HCT116 (cell line): ENCODE measurements at regions of chr4 and their contacts with region 1.

Region 1: GRCh38 chr4:10116580-10117358 is at the start of gene WDR1:
- DNase-seq: peak; percentile 75
- ATAC-seq: peak; percentile 92
- H3K4me3 ChIP-seq: peak within 1 kb of the TSS; percentile 83 to 85
- H3K27ac ChIP-seq: peak within 1 kb of the TSS; percentile 77
- H3K4me1 ChIP-seq: peaks cover 9 to 24% of the 10 kb centered on the region in 2 experiments
- H3K27me3 ChIP-seq: no peaks in the 10 kb centered on the region
- CTCF ChIP-seq: no peak
- POLR2A ChIP-seq: peak; percentile 93
- RAD21 ChIP-seq: no peak
- total RNA-seq, gene WDR1: 223 TPM

Region 2: GRCh38 chr4:9889306-9889705 is 227.5 kb before region 1 on chr4:
- CTCF ChIA-PET with region 1: no interaction called
- POLR2A ChIA-PET with region 1: no interaction called
- RAD21 ChIA-PET with region 1: no interaction called
- intact Hi-C with region 1: no loop called
- DNase-seq: no peak
- ATAC-seq: no peak
- H3K4me3 ChIP-seq: no peak overlapping the region
- H3K27ac ChIP-seq: no peak overlapping the region
- H3K4me1 ChIP-seq: no peaks in the 10 kb centered on the region
- H3K27me3 ChIP-seq: no peaks in the 10 kb centered on the region
- CTCF ChIP-seq: no peak
- POLR2A ChIP-seq: no peak
- RAD21 ChIP-seq: no peak

Region 3: DNA sequence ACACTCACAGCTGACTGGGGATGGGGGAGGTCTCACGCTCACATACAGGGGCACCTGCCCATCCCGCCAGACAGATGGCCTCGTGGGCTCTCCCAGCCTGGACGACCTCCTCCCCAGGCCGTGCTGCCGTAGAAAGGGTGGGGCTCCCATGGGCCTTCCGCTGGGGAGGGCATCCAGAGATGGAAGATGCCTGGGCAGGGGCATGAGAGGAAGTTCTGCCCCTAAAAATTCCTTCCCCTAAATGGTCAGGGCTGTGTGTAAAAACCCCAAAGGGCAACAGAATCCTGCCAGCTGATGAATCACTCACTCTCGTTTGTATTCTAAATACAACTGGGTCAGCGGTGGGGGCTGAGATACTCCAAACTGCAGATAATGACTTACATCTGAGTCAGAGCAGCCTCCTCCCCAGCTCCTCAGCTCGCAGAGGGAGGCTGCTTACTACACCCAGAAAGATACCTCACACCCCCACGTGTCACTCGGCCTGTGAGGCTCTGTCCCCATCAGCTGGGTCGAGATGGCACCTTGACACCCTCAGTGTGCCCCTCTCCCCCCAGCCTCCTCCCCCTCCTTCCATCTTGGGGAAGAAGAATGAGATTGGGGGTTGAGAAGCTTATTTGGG is 10.2 kb before region 1 on chr4:
- CTCF ChIA-PET with region 1: interaction called, 4 read pairs
- POLR2A ChIA-PET with region 1: interaction called, 38 read pairs
- RAD21 ChIA-PET with region 1: no interaction called
- intact Hi-C with region 1: no loop called
- DNase-seq: peak; percentile 62
- ATAC-seq: peak; percentile 91
- H3K4me3 ChIP-seq: peak overlapping the region; percentile 13 to 27; a peak in 2 of 4 replicates
- H3K27ac ChIP-seq: peak overlapping the region; percentile 60
- H3K4me1 ChIP-seq: peaks cover 13 to 65% of the 10 kb centered on the region in 2 experiments
- H3K27me3 ChIP-seq: no peaks in the 10 kb centered on the region
- CTCF ChIP-seq: no peak
- POLR2A ChIP-seq: no peak
- RAD21 ChIP-seq: no peak

Region 4: GRCh38 chr4:10783351-10783750 is 666.6 kb after region 1 on chr4:
- CTCF ChIA-PET with region 1: no interaction called
- POLR2A ChIA-PET with region 1: no interaction called
- RAD21 ChIA-PET with region 1: no interaction called
- intact Hi-C with region 1: no loop called
- DNase-seq: no peak
- ATAC-seq: no peak
- H3K4me3 ChIP-seq: no peak overlapping the region
- H3K27ac ChIP-seq: no peak overlapping the region
- H3K4me1 ChIP-seq: no peaks in the 10 kb centered on the region
- H3K27me3 ChIP-seq: no peaks in the 10 kb centered on the region
- CTCF ChIP-seq: no peak
- POLR2A ChIP-seq: no peak
- RAD21 ChIP-seq: no peak

Region 5: DNA sequence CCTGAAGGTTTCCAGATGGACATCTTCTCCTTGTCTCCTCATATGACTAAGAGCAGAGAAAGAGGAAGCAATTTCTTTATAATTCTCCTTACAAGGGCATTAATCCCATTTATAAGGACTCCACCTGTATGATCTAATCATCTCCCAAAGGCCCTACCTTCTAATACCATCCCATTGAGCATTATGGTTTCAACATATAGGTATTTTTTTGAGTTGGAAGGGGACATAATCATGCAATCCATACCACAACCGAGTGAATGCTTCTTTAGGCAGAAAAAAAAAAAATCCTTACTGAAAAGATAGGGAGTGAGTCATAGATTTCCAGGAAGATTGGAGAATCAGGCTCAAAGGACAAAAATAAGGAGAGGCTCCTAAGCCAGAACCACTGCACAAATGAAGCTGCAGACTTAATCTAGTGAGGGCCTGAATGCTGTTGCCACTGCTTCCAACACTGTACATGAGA is 1624.5 kb after region 1 on chr4:
- CTCF ChIA-PET with region 1: no interaction called
- POLR2A ChIA-PET with region 1: no interaction called
- RAD21 ChIA-PET with region 1: no interaction called
- intact Hi-C with region 1: loop called (anchors 5 kb)
- DNase-seq: no peak
- ATAC-seq: peak; percentile 61
- H3K4me3 ChIP-seq: no peak overlapping the region
- H3K27ac ChIP-seq: peak overlapping the region; percentile 65
- H3K4me1 ChIP-seq: peaks cover 33 to 40% of the 10 kb centered on the region in 2 experiments
- H3K27me3 ChIP-seq: no peaks in the 10 kb centered on the region
- CTCF ChIP-seq: no peak
- POLR2A ChIP-seq: no peak
- RAD21 ChIP-seq: peak; percentile 14; the same call in 1 of the 2 replicates